HEK293T (cell line): ENCODE measurements at regions of chr6 and their contacts with region 1.

Region 1: GRCh38 chr6:43286980-43287716 is 10.9 kb upstream of the SLC22A7 start:
- DNase-seq: no peak

Region 2: DNA sequence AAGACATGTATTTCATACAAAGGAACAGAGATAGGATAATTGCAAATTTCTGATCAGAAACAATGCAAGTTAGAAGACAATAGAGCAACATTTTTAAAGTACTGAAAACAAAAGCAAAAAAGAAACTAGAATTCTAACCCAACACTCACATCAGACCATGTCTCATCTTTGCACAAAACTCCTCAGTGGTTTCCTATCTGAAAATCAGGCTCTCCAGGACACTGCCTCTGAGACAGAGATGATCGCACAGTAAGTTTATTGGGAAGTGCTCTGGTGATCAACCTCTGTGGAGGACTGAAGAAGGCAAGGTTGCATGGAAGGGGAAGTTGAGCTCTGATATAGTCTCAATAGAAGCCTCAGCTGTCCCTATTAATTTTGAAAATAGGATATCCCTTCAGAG is 46.2 kb before region 1 on chr6:
- CTCF ChIA-PET with region 1: no interaction called
- POLR2A ChIA-PET with region 1: no interaction called
- DNase-seq: no peak

Region 3: DNA sequence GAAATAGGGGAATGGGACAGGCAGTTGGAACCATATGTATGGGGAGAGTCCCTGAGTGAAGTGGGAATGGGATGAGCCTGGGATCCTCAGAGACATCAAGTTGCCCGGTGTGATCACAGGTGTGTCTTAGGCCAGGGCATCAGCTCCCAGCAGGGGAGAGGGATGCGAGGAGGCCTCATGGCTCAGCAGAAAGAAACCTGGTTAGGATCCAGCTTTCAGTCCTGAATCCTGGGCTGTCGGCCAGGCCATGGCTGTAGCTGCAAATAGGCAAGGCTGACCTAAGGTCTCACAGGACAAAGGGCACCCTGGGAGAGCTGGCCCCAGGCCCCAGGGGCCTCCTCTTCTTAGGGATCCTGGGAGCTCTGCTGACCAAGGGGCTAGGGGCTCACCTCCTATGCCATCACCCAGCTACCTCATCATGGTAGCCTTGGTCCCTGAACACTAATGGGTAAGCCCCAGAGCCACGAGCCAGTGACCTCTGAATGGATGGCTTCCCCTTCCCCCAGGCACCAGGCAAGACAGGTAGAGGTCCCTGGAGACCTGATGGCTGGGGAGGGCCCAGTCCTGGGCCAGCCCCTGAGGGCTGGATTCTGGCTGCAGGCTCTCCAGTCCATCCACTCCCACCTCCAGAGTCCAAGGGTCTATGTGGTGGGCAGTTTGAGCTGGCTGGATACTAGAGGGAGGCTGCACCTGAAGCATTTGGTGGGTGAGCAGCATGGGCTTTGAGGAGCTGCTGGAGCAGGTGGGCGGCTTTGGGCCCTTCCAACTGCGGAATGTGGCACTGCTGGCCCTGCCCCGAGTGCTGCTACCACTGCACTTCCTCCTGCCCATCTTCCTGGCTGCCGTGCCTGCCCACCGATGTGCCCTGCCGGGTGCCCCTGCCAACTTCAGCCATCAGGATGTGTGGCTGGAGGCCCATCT is 10.8 kb after region 1 on chr6 and contains the start of gene SLC22A7:
- CTCF ChIA-PET with region 1: interaction called, 14 read pairs
- POLR2A ChIA-PET with region 1: no interaction called
- DNase-seq: no peak